ENCODE measurements at regions of chr7 and their contacts with region 1.

Region 1: GRCh38 chr7:85226361-85227085 is 39.7 kb upstream of the SEMA3D start:
- DNase-seq: no peak
- H3K4me3 ChIP-seq: no peak overlapping the region
- H3K27ac ChIP-seq: no peak overlapping the region
- H3K4me1 ChIP-seq: no peaks in the 10 kb centered on the region
- CTCF ChIP-seq: no peak

Region 2: DNA sequence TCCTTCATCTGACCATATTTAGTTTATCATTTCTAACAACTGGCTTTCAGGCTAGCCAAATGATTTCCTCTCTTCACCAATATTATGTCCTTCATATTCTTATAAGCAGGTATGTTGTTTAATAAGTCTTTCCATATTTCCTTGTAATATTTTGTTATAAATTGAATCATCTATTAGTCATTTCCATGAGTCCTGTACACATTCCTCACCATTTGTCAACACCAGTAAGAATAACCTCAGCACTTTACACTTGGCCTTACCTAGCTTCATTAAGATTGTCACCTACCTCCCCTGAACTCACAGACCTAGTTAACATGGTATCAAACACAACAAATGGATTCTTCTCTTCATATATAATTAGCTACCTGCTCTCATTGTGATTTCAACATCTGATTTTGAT is 322.0 kb before region 1 on chr7:
- CTCF ChIA-PET with region 1: no interaction called
- POLR2A ChIA-PET with region 1: interaction called, 11 read pairs
- intact Hi-C with region 1: no loop called
- DNase-seq: no peak
- H3K4me3 ChIP-seq: no peak overlapping the region
- H3K27ac ChIP-seq: no peak overlapping the region
- H3K4me1 ChIP-seq: no peaks in the 10 kb centered on the region
- CTCF ChIP-seq: no peak

Region 3: GRCh38 chr7:85237721-85238120 is 11.2 kb after region 1 on chr7:
- CTCF ChIA-PET with region 1: no interaction called
- POLR2A ChIA-PET with region 1: no interaction called
- intact Hi-C with region 1: no loop called
- DNase-seq: no peak
- H3K4me3 ChIP-seq: no peak overlapping the region
- H3K27ac ChIP-seq: no peak overlapping the region
- H3K4me1 ChIP-seq: no peaks in the 10 kb centered on the region
- CTCF ChIP-seq: no peak

Measured in OCI-LY7 (cell line).